ENCODE measurements at regions of chr1 and their contacts with region 1.

Region 1: GRCh38 chr1:78254517-78254916 is 208.8 kb downstream of the GIPC2 start:
- DNase-seq: no peak
- H3K4me3 ChIP-seq: no peak overlapping the region
- H3K27ac ChIP-seq: no peak overlapping the region
- H3K4me1 ChIP-seq: no peaks in the 10 kb centered on the region
- H3K27me3 ChIP-seq: no peaks in the 10 kb centered on the region
- CTCF ChIP-seq: no peak
- POLR2A ChIP-seq: no peak

Region 2: GRCh38 chr1:78303620-78304019 is 49.1 kb after region 1 on chr1:
- intact Hi-C with region 1: loop called (anchors 2 kb)
- DNase-seq: peak in 1 of 2 donors; percentile 47
- H3K4me3 ChIP-seq: no peak overlapping the region
- H3K27ac ChIP-seq: peak overlapping the region in 1 of 2 donors; percentile 56
- H3K4me1 ChIP-seq: no peaks in the 10 kb centered on the region
- H3K27me3 ChIP-seq: no peaks in the 10 kb centered on the region
- CTCF ChIP-seq: no peak
- POLR2A ChIP-seq: no peak